ENCODE measurements at regions of chr9 and their contacts with region 1.

Region 1: DNA sequence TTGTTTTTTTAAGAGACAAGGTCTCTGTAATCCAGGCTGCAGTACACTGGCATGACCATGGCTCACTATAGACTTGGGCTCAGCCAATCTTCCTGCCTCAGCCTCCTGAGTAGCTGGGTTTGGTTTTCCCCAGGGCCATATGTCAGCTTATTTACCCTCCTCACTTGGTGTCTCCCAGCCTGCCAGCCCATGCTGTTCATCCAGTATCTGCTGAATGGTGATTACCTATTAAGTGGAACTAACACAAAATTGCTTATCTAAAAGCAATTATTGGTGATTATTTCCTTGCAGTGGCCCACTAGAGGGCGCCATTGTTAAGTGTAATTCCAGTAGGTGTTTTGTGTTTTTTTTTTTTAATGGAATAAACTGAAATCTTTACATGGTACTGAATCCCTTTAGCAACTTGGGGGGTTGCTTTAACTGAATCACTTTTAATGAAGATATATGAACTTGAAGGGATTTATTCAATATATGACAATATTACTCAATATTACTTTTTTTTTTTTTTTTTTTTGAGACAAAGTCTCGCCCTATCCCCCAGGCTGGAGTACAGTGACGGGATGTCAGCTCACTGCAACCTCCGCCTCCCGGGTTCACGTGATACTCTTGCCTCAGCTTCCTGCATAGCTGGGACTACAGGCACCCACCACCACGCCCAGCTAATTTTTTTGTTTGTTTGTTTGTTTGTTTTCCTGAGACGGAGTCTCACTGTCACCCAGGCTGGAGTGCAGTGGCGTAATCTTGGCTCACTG is 13.8 kb downstream of the EXOSC2 start:
- DNase-seq: peak; percentile 34
- H3K4me3 ChIP-seq: no peak overlapping the region; a peak in 1 of 4 replicates
- H3K27ac ChIP-seq: peak overlapping the region in 1 of 2 experiments; percentile 8; a peak in 1 of 4 replicates
- H3K4me1 ChIP-seq: no peaks in the 10 kb centered on the region
- H3K27me3 ChIP-seq: no peaks in the 10 kb centered on the region
- CTCF ChIP-seq: peak; percentile 94
- EP300 ChIP-seq: no peak
- RAD21 ChIP-seq: peak; percentile 77

Region 2: GRCh38 chr9:130640681-130641080 is 66.7 kb before region 1 on chr9:
- CTCF ChIA-PET with region 1: no interaction called
- POLR2A ChIA-PET with region 1: no interaction called
- DNase-seq: no peak
- H3K4me3 ChIP-seq: no peak overlapping the region
- H3K27ac ChIP-seq: no peak overlapping the region
- H3K4me1 ChIP-seq: no peaks in the 10 kb centered on the region
- H3K27me3 ChIP-seq: no peaks in the 10 kb centered on the region
- CTCF ChIP-seq: no peak
- EP300 ChIP-seq: no peak
- RAD21 ChIP-seq: no peak

Region 3: GRCh38 chr9:130693426-130694191 is 13.8 kb before region 1 on chr9 and contains the start of gene EXOSC2:
- CTCF ChIA-PET with region 1: interaction called, 58 read pairs
- POLR2A ChIA-PET with region 1: interaction called, 3 read pairs
- DNase-seq: peak; percentile 95
- H3K4me3 ChIP-seq: peak within 1 kb of the TSS; percentile 70 to 76
- H3K27ac ChIP-seq: peak within 1 kb of the TSS; percentile 23 to 74; a peak in 3 of 4 replicates
- H3K4me1 ChIP-seq: peaks cover 0 to 22% of the 10 kb centered on the region in 2 experiments; a peak in 1 of 4 replicates
- H3K27me3 ChIP-seq: no peaks in the 10 kb centered on the region
- CTCF ChIP-seq: no peak
- EP300 ChIP-seq: no peak
- RAD21 ChIP-seq: no peak
- polyA plus RNA-seq, gene EXOSC2: 28.7 and 36.8 TPM in 2 replicates

Region 4: GRCh38 chr9:130732131-130732530 is 24.7 kb after region 1 on chr9:
- CTCF ChIA-PET with region 1: interaction called, 10 read pairs
- POLR2A ChIA-PET with region 1: no interaction called
- DNase-seq: peak; percentile 44
- H3K4me3 ChIP-seq: no peak overlapping the region
- H3K27ac ChIP-seq: no peak overlapping the region; a peak in 1 of 4 replicates
- H3K4me1 ChIP-seq: peaks cover 0 to 7% of the 10 kb centered on the region in 2 experiments; a peak in 1 of 4 replicates
- H3K27me3 ChIP-seq: no peaks in the 10 kb centered on the region
- CTCF ChIP-seq: peak; percentile 26; the same call in 1 of the 2 replicates
- EP300 ChIP-seq: no peak
- RAD21 ChIP-seq: no peak

Region 5: GRCh38 chr9:130770679-130771442 is 63.5 kb after region 1 on chr9:
- CTCF ChIA-PET with region 1: interaction called, 14 read pairs
- POLR2A ChIA-PET with region 1: no interaction called
- DNase-seq: peak; percentile 71
- H3K4me3 ChIP-seq: no peak overlapping the region; a peak in 1 of 4 replicates
- H3K27ac ChIP-seq: no peak overlapping the region
- H3K4me1 ChIP-seq: peaks cover 6 to 21% of the 10 kb centered on the region in 2 experiments; a peak in 3 of 4 replicates
- H3K27me3 ChIP-seq: no peaks in the 10 kb centered on the region
- CTCF ChIP-seq: peak; percentile 80
- EP300 ChIP-seq: no peak
- RAD21 ChIP-seq: peak; percentile 87

Region 6: GRCh38 chr9:131214286-131214856 is 507.0 kb after region 1 on chr9:
- CTCF ChIA-PET with region 1: no interaction called
- POLR2A ChIA-PET with region 1: no interaction called
- DNase-seq: no peak
- H3K4me3 ChIP-seq: no peak overlapping the region
- H3K27ac ChIP-seq: no peak overlapping the region
- H3K4me1 ChIP-seq: no peaks in the 10 kb centered on the region
- H3K27me3 ChIP-seq: no peaks in the 10 kb centered on the region
- CTCF ChIP-seq: no peak
- EP300 ChIP-seq: no peak
- RAD21 ChIP-seq: no peak

Measured in SK-N-SH (cell line).